WTC11 (cell line): ENCODE measurements at regions of chr4 and their contacts with region 1.

Region 1: GRCh38 chr4:6716018-6716911 is at the start of gene BLOC1S4:
- DNase-seq: peak; percentile 77
- ATAC-seq: peak; percentile 73
- H3K4me3 Mint-ChIP-seq: peak within 1 kb of the TSS; percentile 75
- H3K27ac Mint-ChIP-seq: peak within 1 kb of the TSS; percentile 96
- H3K4me1 Mint-ChIP-seq: peaks cover 8% of the 10 kb centered on the region
- H3K27me3 Mint-ChIP-seq: peaks cover 34% of the 10 kb centered on the region
- CTCF ChIP-seq: no peak
- total RNA-seq, gene BLOC1S4: 21.4 to 23.4 TPM (median 21.9 TPM) in 3 replicates

Region 2: GRCh38 chr4:5845035-5845905 is 871.0 kb before region 1 on chr4:
- CTCF ChIA-PET with region 1: no interaction called
- POLR2A ChIA-PET with region 1: interaction called, 10 read pairs
- DNase-seq: no peak
- ATAC-seq: no peak
- H3K4me3 Mint-ChIP-seq: no peak overlapping the region
- H3K27ac Mint-ChIP-seq: no peak overlapping the region
- H3K4me1 Mint-ChIP-seq: peaks cover 8% of the 10 kb centered on the region
- H3K27me3 Mint-ChIP-seq: no peaks in the 10 kb centered on the region
- CTCF ChIP-seq: no peak

Region 3: DNA sequence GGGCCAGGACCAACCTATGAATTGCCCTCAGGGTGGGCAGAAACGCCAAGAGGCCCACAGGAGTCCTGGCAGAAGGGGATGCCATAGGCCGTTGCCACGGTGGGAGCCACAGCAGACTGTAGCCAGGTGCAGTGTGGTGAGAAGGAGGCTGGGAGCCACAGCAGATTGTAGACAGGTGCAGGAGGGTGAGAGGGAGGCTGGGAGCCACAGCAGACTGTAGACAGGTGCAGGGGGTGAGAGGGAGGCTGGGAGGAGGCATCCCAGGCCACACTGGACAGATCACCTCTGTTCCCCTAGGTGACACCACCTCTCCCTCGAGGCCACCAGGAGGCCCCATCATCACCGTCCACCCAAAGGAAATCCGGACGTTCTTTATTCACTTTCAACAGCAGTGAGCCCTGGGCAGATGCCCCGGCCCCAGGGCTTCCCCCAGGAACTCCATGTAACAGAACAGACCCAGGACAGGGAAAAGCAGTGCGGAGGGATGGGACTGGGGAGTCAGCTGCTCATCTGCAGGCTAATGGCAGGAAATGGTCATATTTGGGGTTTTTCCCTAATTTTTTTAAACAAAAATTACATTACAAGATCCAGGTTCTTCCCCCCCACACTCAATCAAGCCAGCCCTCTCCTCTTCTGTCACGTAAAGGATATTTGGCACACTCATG is 95.2 kb before region 1 on chr4:
- CTCF ChIA-PET with region 1: no interaction called
- POLR2A ChIA-PET with region 1: no interaction called
- DNase-seq: no peak
- ATAC-seq: peak; percentile 46
- H3K4me3 Mint-ChIP-seq: no peak overlapping the region
- H3K27ac Mint-ChIP-seq: no peak overlapping the region
- H3K4me1 Mint-ChIP-seq: peaks cover 6% of the 10 kb centered on the region; the same call in 1 of the 2 replicates
- H3K27me3 Mint-ChIP-seq: no peaks in the 10 kb centered on the region
- CTCF ChIP-seq: no peak